Activated B cell treated with CpG ODN at 0.5 μM for 24 hours (primary cell): ENCODE measurements at regions of chr10 and their contacts with region 1.

Region 1: DNA sequence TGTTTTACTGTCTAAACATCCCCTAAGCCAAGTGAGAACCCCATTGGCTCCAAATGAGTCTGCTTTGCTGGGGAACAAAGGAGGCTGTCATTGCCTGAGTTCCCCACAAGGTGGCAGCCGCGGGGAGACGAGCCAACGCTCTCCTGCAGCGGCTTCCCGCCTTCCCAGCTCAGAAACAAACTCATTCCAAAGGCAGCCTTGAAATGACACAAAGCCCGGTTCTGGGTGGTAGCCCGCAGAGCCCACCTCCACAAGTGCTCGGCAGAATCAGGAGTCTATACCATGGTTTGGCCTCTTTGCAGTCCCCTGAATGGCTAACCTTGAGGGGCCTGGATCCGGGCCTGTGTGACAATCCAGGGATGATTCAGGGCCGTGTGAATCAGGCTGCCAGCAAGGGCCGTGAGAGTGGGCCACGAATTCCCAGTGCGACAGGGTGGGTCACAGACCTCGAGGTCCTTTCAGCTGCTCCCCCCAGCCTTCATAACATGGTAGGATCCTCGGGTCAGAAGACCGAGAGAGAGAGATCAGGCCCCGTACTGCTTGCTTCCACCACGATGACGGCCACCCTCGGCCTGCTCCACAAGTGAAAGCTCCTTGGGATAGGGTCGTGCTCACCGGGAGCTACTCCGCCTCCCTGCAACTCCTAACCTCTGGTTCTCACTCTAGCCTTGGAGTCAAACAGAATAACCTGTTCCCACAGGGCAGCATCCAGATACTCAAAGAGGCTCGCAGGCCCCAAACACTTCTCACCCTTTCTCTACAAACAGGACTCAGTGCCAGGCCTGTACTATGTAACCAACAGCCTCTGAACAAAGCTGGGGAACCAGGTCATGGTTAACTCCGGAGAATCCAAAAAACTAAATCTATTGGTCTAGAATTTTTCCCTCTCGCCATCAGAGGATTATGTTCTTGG is 79.6 kb downstream of the DLG5 start:
- DNase-seq: peak; percentile 46
- ATAC-seq: peak; percentile 65
- H3K4me3 Mint-ChIP-seq: no peak overlapping the region
- H3K27ac Mint-ChIP-seq: no peak overlapping the region
- H3K4me1 Mint-ChIP-seq: peaks cover 2% of the 10 kb centered on the region
- H3K27me3 Mint-ChIP-seq: no peaks in the 10 kb centered on the region
- CTCF ChIP-seq: peak; percentile 85

Region 2: GRCh38 chr10:77823811-77824542 is 23.0 kb before region 1 on chr10:
- CTCF ChIA-PET with region 1: no interaction called
- POLR2A ChIA-PET with region 1: no interaction called
- intact Hi-C with region 1: no loop called
- DNase-seq: no peak
- ATAC-seq: no peak
- H3K4me3 Mint-ChIP-seq: no peak overlapping the region
- H3K27ac Mint-ChIP-seq: no peak overlapping the region
- H3K4me1 Mint-ChIP-seq: no peaks in the 10 kb centered on the region
- H3K27me3 Mint-ChIP-seq: no peaks in the 10 kb centered on the region
- CTCF ChIP-seq: no peak

Region 3: DNA sequence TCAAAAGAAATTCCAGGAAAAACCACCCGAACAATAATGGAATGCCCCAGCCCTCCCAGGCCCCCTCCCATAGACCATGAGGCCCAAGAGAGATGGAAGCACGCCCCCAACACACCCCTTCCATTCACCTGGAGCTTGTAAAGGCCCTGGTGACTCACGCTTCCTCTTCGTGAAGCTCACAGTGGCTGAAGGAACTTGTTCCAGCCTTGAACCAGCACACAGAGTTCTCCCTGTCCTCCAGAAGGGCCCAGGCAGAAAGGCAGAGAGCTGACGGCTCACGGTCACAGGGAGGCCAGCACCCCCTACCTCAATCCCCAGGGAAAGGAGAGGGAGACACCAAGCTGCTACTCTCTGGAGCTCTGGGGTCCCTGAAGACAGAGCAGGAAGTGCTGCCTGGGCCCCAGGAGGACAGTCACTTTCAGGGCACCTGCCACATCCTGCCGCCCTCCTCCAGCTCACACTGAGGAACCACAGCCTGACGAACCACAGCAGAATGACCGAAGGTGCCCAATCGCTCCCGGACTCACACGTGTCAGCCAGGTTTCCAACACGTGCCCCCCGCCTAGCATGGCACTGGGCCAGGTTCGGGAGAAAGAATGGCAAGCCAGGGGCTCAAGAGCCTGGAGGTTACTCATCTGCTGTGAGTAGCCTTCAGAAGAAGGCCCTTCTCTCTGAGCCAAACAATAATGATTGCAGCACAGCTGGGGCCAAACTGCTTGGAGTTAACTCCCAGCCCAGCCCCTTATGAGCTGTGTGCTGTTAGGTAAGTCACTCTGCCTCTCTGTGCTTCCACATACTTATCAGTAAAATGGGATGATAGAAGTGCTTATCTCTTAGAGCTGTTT is 26.8 kb after region 1 on chr10:
- CTCF ChIA-PET with region 1: interaction called, 5 read pairs
- POLR2A ChIA-PET with region 1: no interaction called
- intact Hi-C with region 1: loop called (anchors 1 kb)
- DNase-seq: peak; percentile 46
- ATAC-seq: peak; percentile 79
- H3K4me3 Mint-ChIP-seq: peak overlapping the region; percentile 49
- H3K27ac Mint-ChIP-seq: peak overlapping the region; percentile 82
- H3K4me1 Mint-ChIP-seq: peaks cover 38% of the 10 kb centered on the region
- H3K27me3 Mint-ChIP-seq: no peaks in the 10 kb centered on the region
- CTCF ChIP-seq: no peak

Region 4: DNA sequence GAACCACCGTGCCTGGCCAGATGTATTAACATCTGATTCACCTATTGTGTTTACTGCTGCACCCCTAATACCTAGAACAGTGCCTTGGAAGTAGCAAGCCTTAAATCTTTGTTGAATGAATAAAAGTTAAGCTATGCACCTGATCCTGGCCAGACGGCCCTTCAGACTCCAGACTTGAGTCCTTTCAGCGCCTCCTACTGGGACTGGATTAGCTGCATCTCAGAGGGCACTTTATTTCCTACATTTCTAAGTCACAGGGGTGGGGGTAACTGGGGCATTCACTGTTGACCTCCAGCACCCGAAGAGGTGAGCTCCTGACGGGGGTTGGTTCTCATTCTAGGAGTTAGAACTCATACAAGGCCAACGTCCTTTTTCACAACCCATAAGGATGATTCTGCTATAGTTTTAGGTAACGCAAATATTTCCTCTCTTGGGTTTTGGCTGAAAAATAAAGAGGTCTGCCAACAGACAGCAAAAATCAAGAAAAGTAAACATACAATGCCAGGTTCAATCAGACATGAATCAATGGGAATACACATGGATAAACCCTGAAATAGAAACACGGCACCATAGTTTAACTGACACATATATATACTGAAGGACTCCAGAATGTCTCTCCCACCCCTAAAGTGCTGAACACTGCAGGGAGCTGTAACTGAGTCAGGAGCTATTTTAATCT is 127.6 kb after region 1 on chr10:
- CTCF ChIA-PET with region 1: interaction called, 5 read pairs
- POLR2A ChIA-PET with region 1: interaction called, 12 read pairs
- intact Hi-C with region 1: loop called (anchors 1 kb)
- DNase-seq: no peak
- ATAC-seq: no peak
- H3K4me3 Mint-ChIP-seq: no peak overlapping the region
- H3K27ac Mint-ChIP-seq: no peak overlapping the region
- H3K4me1 Mint-ChIP-seq: peaks cover 6% of the 10 kb centered on the region
- H3K27me3 Mint-ChIP-seq: no peaks in the 10 kb centered on the region
- CTCF ChIP-seq: no peak